CD8-positive, alpha-beta T cell (primary cell): ENCODE measurements at regions of chr6 and their contacts with region 1.

Region 1: GRCh38 chr6:15245361-15246216 is at the start of gene JARID2:
- DNase-seq: peak; percentile 89 to 97 (median 94)
- ATAC-seq: peak; percentile 41
- H3K4me3 ChIP-seq: peak within 1 kb of the TSS; percentile 92 to 99
- H3K4me3 Mint-ChIP-seq: peak within 1 kb of the TSS; percentile 97
- H3K27ac ChIP-seq: peak within 1 kb of the TSS; percentile 83 to 89
- H3K27ac Mint-ChIP-seq: peak within 1 kb of the TSS; percentile 96
- H3K4me1 ChIP-seq: peaks cover 19% of the 10 kb centered on the region
- H3K4me1 Mint-ChIP-seq: peaks cover 28% of the 10 kb centered on the region
- H3K27me3 ChIP-seq: no peaks in the 10 kb centered on the region
- H3K27me3 Mint-ChIP-seq: no peaks in the 10 kb centered on the region
- CTCF ChIP-seq: no peak
- total RNA-seq, gene JARID2: 30.6 to 31.2 TPM

Region 2: GRCh38 chr6:13574149-13574570 is 1671.4 kb before region 1 on chr6:
- CTCF ChIA-PET with region 1: no interaction called
- POLR2A ChIA-PET with region 1: no interaction called
- intact Hi-C with region 1: loop called (anchors 2 to 10 kb)
- DNase-seq: peak; percentile 84 to 98 (median 94)
- ATAC-seq: peak; percentile 84
- H3K4me3 ChIP-seq: peak overlapping the region; percentile 93 to 97
- H3K4me3 Mint-ChIP-seq: peak overlapping the region; percentile 97
- H3K27ac ChIP-seq: peak overlapping the region; percentile 80 to 85
- H3K27ac Mint-ChIP-seq: peak overlapping the region; percentile 97
- H3K4me1 ChIP-seq: peaks cover 4% of the 10 kb centered on the region
- H3K4me1 Mint-ChIP-seq: peaks cover 28% of the 10 kb centered on the region
- H3K27me3 ChIP-seq: no peaks in the 10 kb centered on the region
- H3K27me3 Mint-ChIP-seq: no peaks in the 10 kb centered on the region
- CTCF ChIP-seq: peak; percentile 56

Region 3: DNA sequence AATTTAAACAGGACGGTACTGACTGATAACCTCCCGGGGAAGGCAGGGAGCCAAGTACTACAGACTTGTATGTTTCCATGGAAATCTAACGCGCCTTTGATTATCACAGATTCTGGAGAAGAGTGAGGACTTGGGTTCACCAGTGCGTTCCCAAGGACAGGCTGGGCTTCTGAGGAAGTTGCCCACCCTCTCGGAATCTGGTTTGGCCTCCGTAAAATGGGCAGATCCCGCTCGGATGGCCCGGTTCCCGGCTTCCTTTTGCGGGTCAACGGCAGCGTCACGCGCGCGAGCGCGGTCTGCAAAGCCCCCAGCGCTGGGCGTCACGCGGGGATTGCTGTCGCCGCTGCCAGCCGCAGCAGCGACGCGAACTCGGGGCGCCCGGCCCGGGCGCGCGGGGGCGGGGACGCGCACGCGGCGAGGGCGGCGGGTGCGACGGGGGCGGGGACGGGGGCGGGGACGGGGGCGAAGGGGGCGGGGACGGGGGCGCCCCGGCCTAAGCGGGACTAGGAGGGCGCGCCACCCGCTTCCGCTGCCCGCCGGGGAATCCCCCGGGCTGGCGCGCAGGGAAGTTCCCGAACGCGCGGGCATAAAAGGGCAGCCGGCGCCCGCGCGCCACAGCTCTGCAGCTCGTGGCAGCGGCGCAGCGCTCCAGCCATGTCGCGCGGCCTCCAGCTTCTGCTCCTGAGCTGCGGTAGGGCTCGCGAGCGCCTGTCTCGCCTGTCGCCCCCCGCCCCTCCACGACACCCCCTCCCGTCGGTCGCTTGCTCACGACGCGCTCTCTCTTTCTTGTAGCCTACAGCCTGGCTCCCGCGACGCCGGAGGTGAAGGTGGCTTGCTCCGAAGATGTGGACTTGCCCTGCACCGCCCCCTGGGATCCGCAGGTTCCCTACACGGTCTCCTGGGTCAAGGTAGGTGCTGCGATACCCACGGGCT is 1128.2 kb before region 1 on chr6 and contains the start of gene CD83:
- CTCF ChIA-PET with region 1: no interaction called
- POLR2A ChIA-PET with region 1: no interaction called
- intact Hi-C with region 1: loop called (anchors 1 to 5 kb)
- DNase-seq: peak; percentile 72 to 97 (median 84)
- ATAC-seq: peak; percentile 94
- H3K4me3 ChIP-seq: peak within 1 kb of the TSS; percentile 90 to 92
- H3K4me3 Mint-ChIP-seq: peak within 1 kb of the TSS; percentile 93
- H3K27ac ChIP-seq: peak within 1 kb of the TSS; percentile 66 to 81
- H3K27ac Mint-ChIP-seq: peak within 1 kb of the TSS; percentile 96
- H3K4me1 ChIP-seq: peaks cover 8% of the 10 kb centered on the region
- H3K4me1 Mint-ChIP-seq: peaks cover 39% of the 10 kb centered on the region
- H3K27me3 ChIP-seq: no peaks in the 10 kb centered on the region
- H3K27me3 Mint-ChIP-seq: no peaks in the 10 kb centered on the region
- CTCF ChIP-seq: no peak
- total RNA-seq, gene CD83: 57.2 to 60.4 TPM

Region 4: DNA sequence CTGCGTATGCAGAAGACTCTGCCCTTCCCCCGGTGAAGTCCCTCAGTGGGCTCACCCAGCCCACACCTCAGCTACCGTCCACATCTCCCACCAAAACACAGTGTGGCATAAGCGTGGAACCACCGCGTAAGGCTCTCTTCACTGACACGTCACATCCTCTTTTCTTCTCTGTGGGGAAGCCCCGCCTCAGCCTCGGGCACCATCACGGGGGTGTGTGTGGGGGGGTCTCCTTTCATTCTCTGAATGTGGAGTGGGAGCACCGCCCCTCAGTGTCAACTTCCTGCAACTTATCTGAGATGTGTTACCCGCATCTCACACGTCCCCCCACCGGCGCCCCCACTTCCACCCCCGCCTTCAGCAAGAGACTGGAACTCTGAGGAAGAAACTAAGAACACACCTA is 388.1 kb before region 1 on chr6:
- CTCF ChIA-PET with region 1: no interaction called
- POLR2A ChIA-PET with region 1: no interaction called
- intact Hi-C with region 1: loop called in 1 of 2 experiments (anchors 1 kb)
- DNase-seq: peak; percentile 62 to 97 (median 81)
- ATAC-seq: peak; percentile 98
- H3K4me3 ChIP-seq: peak overlapping the region; percentile 23 to 51
- H3K4me3 Mint-ChIP-seq: peak overlapping the region; percentile 81
- H3K27ac ChIP-seq: peak overlapping the region; percentile 68
- H3K27ac Mint-ChIP-seq: peak overlapping the region; percentile 96
- H3K4me1 ChIP-seq: peaks cover 26% of the 10 kb centered on the region
- H3K4me1 Mint-ChIP-seq: peaks cover 29% of the 10 kb centered on the region
- H3K27me3 ChIP-seq: no peaks in the 10 kb centered on the region
- H3K27me3 Mint-ChIP-seq: no peaks in the 10 kb centered on the region
- CTCF ChIP-seq: no peak

Region 5: GRCh38 chr6:15305496-15305895 is 59.9 kb after region 1 on chr6:
- CTCF ChIA-PET with region 1: no interaction called
- POLR2A ChIA-PET with region 1: no interaction called
- intact Hi-C with region 1: no loop called
- DNase-seq: peak in 2 of 9 experiments; percentile 33 to 62
- ATAC-seq: peak; percentile 58
- H3K4me3 ChIP-seq: no peak overlapping the region
- H3K4me3 Mint-ChIP-seq: peak overlapping the region; percentile 3
- H3K27ac ChIP-seq: peak overlapping the region in 1 of 2 experiments; percentile 62
- H3K27ac Mint-ChIP-seq: peak overlapping the region; percentile 53
- H3K4me1 ChIP-seq: peaks cover 45% of the 10 kb centered on the region
- H3K4me1 Mint-ChIP-seq: peaks cover 71% of the 10 kb centered on the region
- H3K27me3 ChIP-seq: no peaks in the 10 kb centered on the region
- H3K27me3 Mint-ChIP-seq: no peaks in the 10 kb centered on the region
- CTCF ChIP-seq: no peak

Region 6: DNA sequence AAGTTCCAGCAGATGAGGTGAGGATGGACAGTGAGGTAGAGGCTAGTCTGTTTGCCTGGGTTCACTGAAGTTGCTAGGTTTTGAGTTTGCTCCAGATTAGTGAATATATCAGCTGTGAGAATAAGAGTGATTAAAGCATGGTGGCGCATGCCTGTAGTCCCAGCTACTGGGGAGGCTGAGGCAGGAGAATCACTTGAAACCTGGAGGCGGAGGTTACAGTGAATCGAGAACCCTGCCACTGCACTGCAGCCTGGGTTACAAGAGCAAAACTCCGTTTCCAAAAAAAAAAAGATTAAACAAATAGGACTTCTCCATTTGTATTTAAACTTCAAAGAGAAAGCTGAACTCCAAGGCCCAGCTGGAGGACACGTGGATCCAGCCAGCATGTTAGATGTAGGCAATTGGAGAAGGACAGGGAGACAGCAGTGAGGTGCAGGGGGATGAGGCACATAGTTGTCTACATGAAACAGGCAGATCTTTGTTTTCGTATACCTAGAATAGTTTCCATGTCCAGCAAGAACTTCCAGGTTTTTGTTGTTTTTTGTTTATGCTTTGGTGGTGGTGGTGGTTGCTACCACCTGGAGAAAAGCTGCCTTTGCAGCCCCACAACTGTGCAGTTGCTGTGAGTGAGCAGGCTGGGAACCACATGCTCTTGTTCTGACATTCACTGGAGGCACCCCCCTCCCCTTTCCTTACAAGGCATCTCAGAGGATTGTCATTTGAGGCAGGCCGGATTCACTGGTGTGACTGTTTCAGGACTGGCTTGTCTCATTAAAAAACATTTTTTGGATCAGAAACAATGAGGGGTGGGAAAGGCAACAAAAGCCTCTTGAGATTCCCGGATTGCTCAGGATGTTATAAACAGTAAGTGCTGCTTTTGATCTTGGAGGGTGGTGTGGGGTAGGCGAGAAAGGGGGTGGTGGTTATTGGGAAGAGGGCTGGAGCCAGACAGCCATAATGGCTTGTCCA is 72.6 kb after region 1 on chr6:
- CTCF ChIA-PET with region 1: no interaction called
- POLR2A ChIA-PET with region 1: no interaction called
- intact Hi-C with region 1: loop called in 1 of 2 experiments (anchors 2 kb)
- DNase-seq: no peak
- ATAC-seq: no peak
- H3K4me3 ChIP-seq: peak overlapping the region in 1 of 2 experiments; percentile 7
- H3K4me3 Mint-ChIP-seq: no peak overlapping the region
- H3K27ac ChIP-seq: no peak overlapping the region
- H3K27ac Mint-ChIP-seq: no peak overlapping the region
- H3K4me1 ChIP-seq: peaks cover 62% of the 10 kb centered on the region
- H3K4me1 Mint-ChIP-seq: peaks cover 87% of the 10 kb centered on the region
- H3K27me3 ChIP-seq: no peaks in the 10 kb centered on the region
- H3K27me3 Mint-ChIP-seq: no peaks in the 10 kb centered on the region
- CTCF ChIP-seq: no peak

Region 7: DNA sequence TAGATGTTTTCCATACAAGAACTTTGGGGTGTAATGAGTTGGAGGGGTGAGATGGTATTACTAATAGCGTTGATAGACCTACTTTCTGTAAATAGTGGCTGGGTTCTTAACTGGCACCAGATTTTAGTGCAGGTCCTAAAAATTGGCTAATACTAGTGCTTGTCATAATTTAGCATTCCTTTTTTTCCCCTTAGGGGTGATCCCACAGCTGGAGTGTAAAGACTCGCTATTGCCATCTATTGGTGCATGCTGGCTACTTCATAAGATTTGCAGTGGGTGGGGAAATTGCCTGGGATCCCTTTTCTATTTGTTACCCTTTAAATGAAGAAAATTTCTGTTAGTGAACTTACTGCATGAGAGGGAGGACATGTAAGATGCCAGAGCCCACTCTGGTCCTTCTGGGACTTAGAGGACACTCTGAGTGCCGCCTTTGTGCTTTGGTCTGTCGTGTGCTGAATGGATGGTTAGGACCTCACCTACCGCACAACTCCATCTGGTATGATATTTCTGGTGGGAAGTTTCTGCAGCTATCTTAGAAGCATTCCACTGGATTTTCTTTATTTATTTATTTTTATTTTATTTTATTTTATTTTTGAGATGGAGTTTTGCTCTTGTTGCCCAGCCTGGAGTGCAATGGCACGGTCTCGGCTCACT is 195.8 kb after region 1 on chr6:
- CTCF ChIA-PET with region 1: interaction called, 3 read pairs
- POLR2A ChIA-PET with region 1: interaction called, 4 read pairs
- intact Hi-C with region 1: loop called in 1 of 2 experiments (anchors 2 kb)
- DNase-seq: peak in 4 of 9 experiments; percentile 31 to 71 (median 46)
- ATAC-seq: peak; percentile 65
- H3K4me3 ChIP-seq: no peak overlapping the region
- H3K4me3 Mint-ChIP-seq: no peak overlapping the region
- H3K27ac ChIP-seq: no peak overlapping the region
- H3K27ac Mint-ChIP-seq: no peak overlapping the region
- H3K4me1 ChIP-seq: peaks cover 33% of the 10 kb centered on the region
- H3K4me1 Mint-ChIP-seq: peaks cover 79% of the 10 kb centered on the region
- H3K27me3 ChIP-seq: no peaks in the 10 kb centered on the region
- H3K27me3 Mint-ChIP-seq: no peaks in the 10 kb centered on the region
- CTCF ChIP-seq: peak; percentile 76

Region 8: DNA sequence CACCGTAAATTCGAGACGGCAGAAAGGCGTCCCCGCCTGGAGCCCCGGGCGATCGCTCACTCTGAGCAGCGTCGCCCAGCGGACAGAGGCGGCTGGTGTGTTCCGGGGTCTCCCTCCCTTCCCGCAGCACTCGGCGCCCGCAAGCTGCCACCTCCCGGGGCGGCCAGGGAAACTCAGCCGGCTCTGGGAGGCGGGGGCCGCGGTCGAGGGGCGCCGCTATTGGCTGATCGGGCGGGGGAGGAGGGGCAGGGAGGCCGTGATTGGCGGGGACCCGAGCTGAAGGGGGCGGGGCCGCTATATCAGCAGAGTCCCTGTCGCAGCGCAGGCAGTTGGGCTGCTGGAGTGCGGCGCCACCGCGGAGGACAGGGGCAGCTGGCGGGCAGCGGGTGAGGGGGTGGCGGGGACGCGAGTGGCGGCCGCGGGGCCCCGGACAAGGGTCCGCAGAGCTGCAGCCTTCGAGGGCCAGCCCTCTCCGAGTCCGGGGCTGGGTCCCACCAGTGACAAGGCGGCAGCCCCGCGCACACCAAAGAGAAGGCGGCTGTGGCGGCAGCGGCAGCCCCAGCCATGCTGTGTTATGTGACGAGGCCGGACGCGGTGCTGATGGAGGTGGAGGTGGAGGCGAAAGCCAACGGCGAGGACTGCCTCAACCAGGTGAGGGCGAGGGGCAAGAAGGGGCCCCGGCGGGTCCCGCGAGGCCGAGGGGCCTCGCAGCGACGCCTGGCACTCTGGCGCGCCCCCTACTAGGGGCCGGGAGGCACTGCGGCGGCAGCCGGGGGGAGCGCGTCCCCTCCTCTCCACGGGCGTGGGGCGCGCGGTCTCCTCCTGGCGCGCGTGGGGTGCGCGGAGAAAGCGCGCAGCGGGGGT is 883.4 kb after region 1 on chr6 and contains the start of gene MYLIP:
- CTCF ChIA-PET with region 1: no interaction called
- POLR2A ChIA-PET with region 1: no interaction called
- intact Hi-C with region 1: loop called in 1 of 2 experiments (anchors 5 kb)
- DNase-seq: peak; percentile 96 to 99 (median 97)
- ATAC-seq: peak; percentile 81
- H3K4me3 ChIP-seq: peak within 1 kb of the TSS; percentile 75 to 96
- H3K4me3 Mint-ChIP-seq: peak within 1 kb of the TSS; percentile 96
- H3K27ac ChIP-seq: peak within 1 kb of the TSS; percentile 90 to 94
- H3K27ac Mint-ChIP-seq: peak within 1 kb of the TSS; percentile 96
- H3K4me1 ChIP-seq: peaks cover 29% of the 10 kb centered on the region
- H3K4me1 Mint-ChIP-seq: peaks cover 33% of the 10 kb centered on the region
- H3K27me3 ChIP-seq: peaks cover 0 to 2% of the 10 kb centered on the region in 2 experiments
- H3K27me3 Mint-ChIP-seq: no peaks in the 10 kb centered on the region
- CTCF ChIP-seq: peak; percentile 61
- total RNA-seq, gene MYLIP: 225 to 231 TPM